ENCODE measurements at regions of chr20 and their contacts with region 1.

Region 1: DNA sequence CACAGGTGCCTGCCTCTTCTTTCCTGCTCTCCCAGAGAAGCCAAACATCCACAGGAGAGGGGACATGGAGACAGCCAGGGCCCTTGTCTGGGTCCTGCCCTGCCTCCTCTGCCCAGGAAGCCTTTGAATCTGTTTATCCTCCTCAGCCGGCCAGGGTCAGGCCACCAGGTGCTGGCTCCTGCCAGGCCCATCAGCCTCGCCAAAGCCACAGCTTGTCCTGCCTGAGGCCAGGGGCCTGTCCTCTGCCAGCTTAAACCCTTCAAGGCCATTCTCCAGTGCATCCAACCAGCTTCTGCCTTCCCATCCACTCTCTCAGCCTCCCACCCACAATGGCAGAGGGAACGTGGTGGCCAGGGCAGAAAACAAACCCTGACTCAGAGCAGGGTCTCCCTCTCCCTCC is 254.6 kb downstream of the ANKRD60 start:
- DNase-seq: no peak

Region 2: GRCh38 chr20:57921676-57922075 is 52.2 kb before region 1 on chr20:
- intact Hi-C with region 1: no loop called
- DNase-seq: peak; percentile 25

Region 3: GRCh38 chr20:58081846-58082245 is 108.0 kb after region 1 on chr20:
- intact Hi-C with region 1: loop called in 1 of 2 experiments (anchors 2 kb)
- DNase-seq: no peak